ENCODE measurements at regions of chr10 and their contacts with region 1.

Region 1: DNA sequence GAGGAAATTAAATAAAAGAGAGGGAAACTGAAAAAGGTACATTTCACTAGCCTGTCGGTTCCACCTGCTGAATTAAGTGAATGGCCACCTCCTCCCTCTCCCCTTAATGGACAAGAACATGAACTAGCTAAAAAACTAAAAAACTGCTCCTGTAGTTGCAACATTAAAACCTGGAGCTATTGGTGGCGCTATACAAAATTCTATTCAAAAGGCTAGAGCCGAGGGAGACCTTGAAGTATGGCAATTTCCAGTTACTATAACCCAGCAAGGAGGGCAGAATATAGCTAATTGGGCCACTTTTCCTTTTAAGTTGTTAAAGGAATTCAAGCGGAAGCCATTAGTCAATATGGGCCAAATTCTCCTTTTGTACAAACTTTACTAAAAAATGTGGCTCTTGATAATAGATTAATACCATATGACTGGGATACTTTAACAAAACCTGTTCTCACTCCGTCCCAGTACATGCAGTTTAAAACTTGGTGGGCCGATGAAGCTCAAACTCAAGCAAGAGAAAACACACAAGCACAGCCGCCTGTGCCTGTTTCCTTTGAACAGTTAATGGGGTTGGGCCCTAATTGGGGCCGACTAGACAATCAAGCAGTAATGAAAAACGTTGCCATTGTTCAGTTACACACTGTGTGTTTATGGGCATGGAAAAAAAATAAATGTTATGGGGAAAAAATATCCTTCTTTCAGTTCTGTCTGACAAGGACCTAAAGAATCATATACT is 6.5 kb upstream of the CHST3 start:
- DNase-seq: no peak
- CTCF ChIP-seq: no peak

Region 2: GRCh38 chr10:71933651-71934050 is 24.1 kb before region 1 on chr10:
- CTCF ChIA-PET with region 1: interaction called, 11 read pairs
- POLR2A ChIA-PET with region 1: no interaction called
- DNase-seq: peak; percentile 56
- CTCF ChIP-seq: no peak

Measured in GM10248 (cell line).